Activated naive CD4-positive, alpha-beta T cell treated with anti-CD3 and anti-CD28 coated beads, Interleukin-2, amount 10 ng/mL, durations not matched to agents 7 days and 5 days (primary cell): ENCODE measurements at regions of chr1 and their contacts with region 1.

Region 1: GRCh38 chr1:22105611-22106207 is 37.2 kb downstream of the WNT4 start:
- DNase-seq: peak; percentile 56
- H3K4me3 Mint-ChIP-seq: no peak overlapping the region
- H3K27ac Mint-ChIP-seq: peak overlapping the region; percentile 94
- H3K4me1 Mint-ChIP-seq: peaks cover 57% of the 10 kb centered on the region
- H3K27me3 Mint-ChIP-seq: no peaks in the 10 kb centered on the region

Region 2: GRCh38 chr1:22093513-22093912 is 12.2 kb before region 1 on chr1:
- CTCF ChIA-PET with region 1: interaction called, 15 read pairs
- DNase-seq: no peak
- H3K4me3 Mint-ChIP-seq: no peak overlapping the region
- H3K27ac Mint-ChIP-seq: peak overlapping the region; percentile 49
- H3K4me1 Mint-ChIP-seq: peaks cover 66% of the 10 kb centered on the region
- H3K27me3 Mint-ChIP-seq: no peaks in the 10 kb centered on the region

Region 3: DNA sequence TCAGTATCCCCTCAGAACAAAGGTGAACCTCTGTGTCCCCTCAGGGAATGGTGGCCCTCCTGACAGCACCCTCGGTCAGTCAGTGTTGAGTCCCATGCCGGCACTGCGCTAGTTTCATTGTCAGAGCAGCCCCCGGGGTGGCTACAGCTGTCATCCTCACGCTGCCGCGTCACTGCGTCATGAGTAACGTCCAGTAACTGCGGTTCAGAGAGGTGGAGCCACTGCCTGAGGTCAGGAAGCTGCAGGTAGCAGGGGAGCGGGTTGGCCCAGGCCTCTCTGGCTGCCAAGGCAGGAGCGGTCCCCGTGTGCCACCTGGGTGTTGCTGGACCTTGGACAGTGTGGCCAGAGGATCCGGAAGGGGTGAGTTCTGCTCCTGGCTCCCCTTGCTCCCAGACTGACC is 57.4 kb after region 1 on chr1:
- CTCF ChIA-PET with region 1: no interaction called
- DNase-seq: no peak
- H3K4me3 Mint-ChIP-seq: no peak overlapping the region
- H3K27ac Mint-ChIP-seq: no peak overlapping the region
- H3K4me1 Mint-ChIP-seq: no peaks in the 10 kb centered on the region
- H3K27me3 Mint-ChIP-seq: peaks cover 26% of the 10 kb centered on the region